ENCODE measurements at regions of chr4 and their contacts with region 1.

Region 1: DNA sequence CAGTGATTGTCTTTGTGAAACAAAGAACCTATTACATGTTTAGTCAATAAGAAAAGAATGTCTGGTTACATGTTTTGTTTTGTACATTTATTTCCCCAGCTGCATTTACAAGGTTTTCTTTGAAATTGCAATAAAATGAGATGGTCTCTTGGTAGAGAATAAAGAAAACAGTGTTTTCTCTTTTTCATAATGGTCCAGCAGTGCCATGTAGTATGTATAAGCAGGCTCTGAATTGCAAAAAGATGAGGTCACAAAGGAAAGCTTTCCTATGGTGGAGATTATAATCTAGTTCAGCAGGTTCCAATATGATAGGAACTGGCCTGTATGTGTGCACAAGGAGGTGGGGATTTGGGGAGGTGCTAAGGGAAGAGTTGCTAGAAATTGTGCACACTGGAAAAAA is 1417.3 kb downstream of the STIM2 start:
- DNase-seq: no peak
- H3K4me3 ChIP-seq: peak overlapping the region in 1 of 59 donors; percentile 18
- H3K27ac ChIP-seq: peak overlapping the region in 54 of 59 donors; percentile 51 to 98 (median 90)
- H3K27me3 ChIP-seq: no peaks in the 10 kb centered on the region
- CTCF ChIP-seq: peak in 1 of 56 donors; percentile 7

Region 2: DNA sequence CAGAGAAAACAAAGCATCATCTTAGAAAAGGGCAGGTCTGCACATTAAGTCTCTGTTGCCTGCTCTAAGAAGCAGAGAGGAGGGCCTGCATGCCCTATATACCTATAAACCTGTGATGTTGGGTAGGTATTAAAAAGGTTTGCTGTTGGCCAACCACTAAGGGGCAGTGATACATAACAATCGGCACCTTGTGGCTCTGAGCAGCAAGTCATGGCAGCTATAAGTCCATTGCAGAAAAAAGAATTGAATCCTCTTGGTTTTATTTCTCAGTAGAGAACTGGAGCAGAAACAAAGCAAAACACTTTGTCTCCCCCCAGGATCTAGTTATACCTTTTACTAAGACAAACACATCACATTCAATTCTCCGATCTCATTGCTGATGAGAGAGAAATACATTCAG is 52.9 kb before region 1 on chr4:
- intact Hi-C with region 1: loop called in 1 of 2 experiments (anchors 5 kb)
- DNase-seq: peak in 2 of 10 donors; percentile 29 to 50
- H3K4me3 ChIP-seq: no peak overlapping the region
- H3K27ac ChIP-seq: peak overlapping the region in 48 of 59 donors; percentile 16 to 92 (median 80)
- H3K27me3 ChIP-seq: no peaks in the 10 kb centered on the region
- CTCF ChIP-seq: peak in 52 of 56 donors; percentile 17 to 66 (median 44)

Region 3: GRCh38 chr4:28402751-28403150 is 124.8 kb after region 1 on chr4:
- intact Hi-C with region 1: no loop called
- DNase-seq: no peak
- H3K4me3 ChIP-seq: no peak overlapping the region
- H3K27ac ChIP-seq: no peak overlapping the region
- H3K27me3 ChIP-seq: no peaks in the 10 kb centered on the region
- CTCF ChIP-seq: no peak

Measured in dorsolateral prefrontal cortex (tissue), 120 donors.